HCT116 (cell line): ENCODE measurements at regions of chr18 and their contacts with region 1.

Region 1: GRCh38 chr18:63848159-63848558 is 39.3 kb upstream of the SERPINB2 start:
- DNase-seq: peak; percentile 66
- ATAC-seq: peak; percentile 76
- H3K4me3 ChIP-seq: no peak overlapping the region
- H3K27ac ChIP-seq: no peak overlapping the region
- H3K4me1 ChIP-seq: no peaks in the 10 kb centered on the region
- H3K27me3 ChIP-seq: no peaks in the 10 kb centered on the region
- CTCF ChIP-seq: peak; percentile 56 to 81 (median 70); a peak in 5 of 6 replicates
- POLR2A ChIP-seq: no peak
- RAD21 ChIP-seq: peak; percentile 74

Region 2: DNA sequence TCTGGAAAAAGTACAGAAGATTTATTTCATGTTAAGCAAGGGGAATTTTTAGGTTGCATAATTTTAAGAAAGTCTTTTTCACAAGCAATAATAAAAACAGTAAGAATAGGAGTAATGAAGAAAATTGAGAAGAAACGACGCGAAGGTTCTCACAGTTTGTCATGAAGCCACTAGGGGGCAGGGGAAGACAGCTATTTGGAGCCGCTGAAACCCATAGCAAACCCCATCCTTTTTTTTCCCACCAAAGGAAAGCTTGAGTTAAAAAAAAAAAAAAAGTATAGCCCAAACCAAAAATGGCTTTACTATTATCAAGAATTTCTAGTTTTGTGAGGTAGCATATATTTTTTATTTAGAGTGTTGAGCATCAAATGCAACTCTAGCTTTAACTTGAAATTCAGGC is 831.9 kb before region 1 on chr18:
- CTCF ChIA-PET with region 1: interaction called, 5 read pairs
- POLR2A ChIA-PET with region 1: no interaction called
- RAD21 ChIA-PET with region 1: no interaction called
- intact Hi-C with region 1: loop called (anchors 2 kb)
- DNase-seq: peak; percentile 32
- ATAC-seq: peak; percentile 79
- H3K4me3 ChIP-seq: no peak overlapping the region
- H3K27ac ChIP-seq: no peak overlapping the region
- H3K4me1 ChIP-seq: no peaks in the 10 kb centered on the region
- H3K27me3 ChIP-seq: no peaks in the 10 kb centered on the region
- CTCF ChIP-seq: peak; percentile 73 to 87 (median 73)
- POLR2A ChIP-seq: no peak
- RAD21 ChIP-seq: peak; percentile 82

Region 3: DNA sequence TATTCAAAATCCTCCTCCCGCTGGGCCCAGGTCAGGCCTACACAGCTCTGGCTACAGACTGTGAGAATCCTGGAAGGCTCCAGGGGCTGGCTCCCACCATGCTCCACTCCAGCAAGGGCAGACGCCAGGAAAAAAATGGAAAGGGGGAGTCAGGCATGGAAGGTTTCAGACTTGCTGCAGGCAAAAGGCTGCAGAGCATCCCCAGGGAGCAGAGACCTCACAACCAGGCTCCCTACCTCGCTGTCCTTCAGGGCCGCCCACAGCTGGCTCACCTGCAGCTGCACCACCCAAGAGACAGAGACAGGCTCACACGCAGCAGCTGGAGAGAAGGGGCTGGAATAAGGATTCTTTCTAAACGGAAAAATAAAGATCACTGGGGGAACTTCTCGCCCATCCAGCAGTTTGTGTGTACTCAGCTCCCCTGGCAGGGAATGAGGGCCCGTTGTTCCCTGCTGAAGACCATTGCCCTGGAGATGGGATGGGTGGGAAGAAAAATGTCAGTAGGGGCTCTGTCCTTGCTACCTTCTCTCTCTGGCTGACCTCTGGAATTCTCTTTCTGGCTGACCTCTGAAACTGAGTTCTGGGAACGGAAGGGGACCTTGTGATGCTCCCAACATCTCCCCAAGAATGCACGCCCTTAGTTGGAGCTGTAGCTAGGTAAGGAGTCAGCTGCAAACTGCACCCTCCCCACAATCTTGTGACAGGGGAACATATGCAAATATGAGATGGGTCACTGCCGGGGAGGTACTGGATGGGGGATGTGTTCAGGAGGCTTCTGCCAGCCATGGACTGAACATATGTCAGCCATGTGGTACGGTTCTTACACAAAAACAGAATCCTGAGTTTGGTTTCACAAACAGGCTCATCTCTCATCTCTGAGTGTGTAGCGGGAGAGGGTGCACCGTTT is 563.1 kb before region 1 on chr18:
- CTCF ChIA-PET with region 1: no interaction called
- POLR2A ChIA-PET with region 1: no interaction called
- RAD21 ChIA-PET with region 1: no interaction called
- intact Hi-C with region 1: no loop called
- DNase-seq: no peak
- ATAC-seq: no peak
- H3K4me3 ChIP-seq: no peak overlapping the region
- H3K27ac ChIP-seq: no peak overlapping the region
- H3K4me1 ChIP-seq: no peaks in the 10 kb centered on the region
- H3K27me3 ChIP-seq: peaks cover 14% of the 10 kb centered on the region; the same call in 1 of the 2 replicates
- CTCF ChIP-seq: no peak
- POLR2A ChIP-seq: no peak
- RAD21 ChIP-seq: no peak

Region 4: DNA sequence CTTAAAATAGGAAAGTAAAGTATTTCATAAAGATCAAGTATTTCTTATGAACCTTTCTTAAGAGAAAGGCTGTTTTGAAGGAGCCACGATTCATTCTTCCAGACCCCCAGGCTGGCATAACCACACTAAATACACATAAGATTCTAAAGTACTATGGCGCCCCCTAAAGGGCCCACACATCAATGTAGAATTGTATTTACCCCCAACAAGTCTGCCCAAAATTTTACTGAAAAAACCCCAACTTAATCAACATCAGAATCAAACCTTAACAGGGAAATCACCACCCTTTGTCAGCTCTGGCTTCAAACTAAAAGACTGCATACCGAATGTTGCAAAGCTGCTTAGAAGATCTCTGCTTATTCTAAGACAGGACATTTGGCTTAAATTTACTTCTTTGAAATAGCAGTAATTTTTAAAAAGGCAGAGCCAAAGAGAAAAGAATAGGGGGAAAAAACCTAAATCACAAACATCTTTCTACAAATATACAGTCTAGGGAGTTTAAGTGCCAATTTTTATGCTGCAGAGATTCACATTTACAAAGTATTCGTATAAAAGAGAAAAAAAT is 508.2 kb before region 1 on chr18:
- CTCF ChIA-PET with region 1: no interaction called
- POLR2A ChIA-PET with region 1: no interaction called
- RAD21 ChIA-PET with region 1: no interaction called
- intact Hi-C with region 1: loop called (anchors 10 kb)
- DNase-seq: peak; percentile 10
- ATAC-seq: peak; percentile 57; the same call in 1 of the 2 replicates
- H3K4me3 ChIP-seq: no peak overlapping the region
- H3K27ac ChIP-seq: no peak overlapping the region
- H3K4me1 ChIP-seq: peaks cover 10 to 15% of the 10 kb centered on the region in 2 experiments
- H3K27me3 ChIP-seq: no peaks in the 10 kb centered on the region
- CTCF ChIP-seq: peak; percentile 29 to 78 (median 68); a peak in 5 of 6 replicates
- POLR2A ChIP-seq: no peak
- RAD21 ChIP-seq: peak; percentile 41; the same call in 1 of the 2 replicates

Region 5: GRCh38 chr18:63439334-63439733 is 408.8 kb before region 1 on chr18:
- CTCF ChIA-PET with region 1: interaction called, 3 read pairs
- POLR2A ChIA-PET with region 1: no interaction called
- RAD21 ChIA-PET with region 1: no interaction called
- intact Hi-C with region 1: loop called (anchors 5 kb)
- DNase-seq: peak; percentile 70
- ATAC-seq: peak; percentile 93
- H3K4me3 ChIP-seq: no peak overlapping the region
- H3K27ac ChIP-seq: no peak overlapping the region
- H3K4me1 ChIP-seq: 0 out of 4 replicates have a peak, but pooled peaks cover 0 to 2% of the 10 kb centered on the region in 2 experiments
- H3K27me3 ChIP-seq: no peaks in the 10 kb centered on the region
- CTCF ChIP-seq: peak; percentile 73 to 89 (median 80)
- POLR2A ChIP-seq: no peak
- RAD21 ChIP-seq: peak; percentile 88

Region 6: GRCh38 chr18:63511286-63511685 is 336.9 kb before region 1 on chr18:
- CTCF ChIA-PET with region 1: interaction called, 32 read pairs
- POLR2A ChIA-PET with region 1: no interaction called
- RAD21 ChIA-PET with region 1: interaction called in 1 of 2 experiments, 4 read pairs
- intact Hi-C with region 1: no loop called
- DNase-seq: peak; percentile 82
- ATAC-seq: peak; percentile 92
- H3K4me3 ChIP-seq: no peak overlapping the region
- H3K27ac ChIP-seq: no peak overlapping the region
- H3K4me1 ChIP-seq: no peaks in the 10 kb centered on the region
- H3K27me3 ChIP-seq: no peaks in the 10 kb centered on the region
- CTCF ChIP-seq: peak; percentile 55 to 85 (median 78); a peak in 5 of 6 replicates
- POLR2A ChIP-seq: no peak
- RAD21 ChIP-seq: peak; percentile 58

Region 7: GRCh38 chr18:63518178-63519012 is 329.8 kb before region 1 on chr18:
- CTCF ChIA-PET with region 1: interaction called, 32 read pairs
- POLR2A ChIA-PET with region 1: interaction called, 3 read pairs
- RAD21 ChIA-PET with region 1: interaction called, 3 read pairs
- intact Hi-C with region 1: loop called (anchors 1 kb)
- DNase-seq: peak; percentile 78
- ATAC-seq: peak; percentile 98
- H3K4me3 ChIP-seq: no peak overlapping the region
- H3K27ac ChIP-seq: no peak overlapping the region
- H3K4me1 ChIP-seq: no peaks in the 10 kb centered on the region
- H3K27me3 ChIP-seq: no peaks in the 10 kb centered on the region
- CTCF ChIP-seq: peak; percentile 50 to 76 (median 74); a peak in 5 of 6 replicates
- POLR2A ChIP-seq: no peak
- RAD21 ChIP-seq: peak; percentile 90

Region 8: DNA sequence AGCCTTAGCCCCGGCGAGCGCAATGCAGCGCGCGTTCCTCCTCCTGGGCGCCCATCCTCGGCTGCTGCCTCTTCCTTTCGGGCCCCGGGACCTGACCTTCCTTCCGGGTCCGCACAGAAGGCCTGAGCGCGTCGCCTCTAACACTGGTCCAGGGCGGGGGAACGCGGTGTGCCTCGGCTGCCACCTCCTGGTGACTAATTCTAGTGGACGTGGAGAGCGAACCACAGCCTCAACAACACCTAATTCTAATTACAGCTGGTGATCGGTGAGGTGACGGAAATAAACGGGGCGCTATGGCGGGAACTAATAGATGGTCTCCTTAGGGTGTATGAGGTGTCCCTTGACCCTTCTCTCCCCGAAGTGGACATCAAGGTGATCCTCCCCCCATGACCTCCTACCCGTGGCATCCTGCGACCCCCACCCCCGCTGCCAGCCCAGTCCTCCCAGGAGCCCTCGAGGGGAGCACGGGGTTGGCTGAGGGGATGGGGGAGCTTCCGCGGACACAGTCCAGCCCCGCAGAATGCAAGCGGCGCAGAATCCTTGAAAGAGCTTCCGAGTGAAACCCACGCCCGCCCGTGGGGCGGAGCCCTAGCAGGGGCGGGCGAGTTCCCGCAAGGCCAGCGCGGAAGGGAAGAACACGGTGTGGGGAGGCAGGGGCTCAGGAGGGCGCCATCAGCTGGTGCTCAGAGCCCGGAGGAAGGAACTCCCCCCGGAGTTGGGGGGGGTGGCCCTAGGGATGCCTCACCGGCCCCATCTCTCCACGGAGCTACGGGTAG is 88.2 kb after region 1 on chr18:
- CTCF ChIA-PET with region 1: interaction called, 5 read pairs
- POLR2A ChIA-PET with region 1: no interaction called
- RAD21 ChIA-PET with region 1: no interaction called
- intact Hi-C with region 1: loop called (anchors 1 kb)
- DNase-seq: peak; percentile 64
- ATAC-seq: peak; percentile 100
- H3K4me3 ChIP-seq: peak overlapping the region; percentile 22 to 37
- H3K27ac ChIP-seq: no peak overlapping the region
- H3K4me1 ChIP-seq: peaks cover 0 to 10% of the 10 kb centered on the region in 2 experiments; a peak in 1 of 4 replicates
- H3K27me3 ChIP-seq: no peaks in the 10 kb centered on the region
- CTCF ChIP-seq: peak; percentile 63 to 78 (median 71); a peak in 5 of 6 replicates
- POLR2A ChIP-seq: no peak
- RAD21 ChIP-seq: peak; percentile 73

Region 9: DNA sequence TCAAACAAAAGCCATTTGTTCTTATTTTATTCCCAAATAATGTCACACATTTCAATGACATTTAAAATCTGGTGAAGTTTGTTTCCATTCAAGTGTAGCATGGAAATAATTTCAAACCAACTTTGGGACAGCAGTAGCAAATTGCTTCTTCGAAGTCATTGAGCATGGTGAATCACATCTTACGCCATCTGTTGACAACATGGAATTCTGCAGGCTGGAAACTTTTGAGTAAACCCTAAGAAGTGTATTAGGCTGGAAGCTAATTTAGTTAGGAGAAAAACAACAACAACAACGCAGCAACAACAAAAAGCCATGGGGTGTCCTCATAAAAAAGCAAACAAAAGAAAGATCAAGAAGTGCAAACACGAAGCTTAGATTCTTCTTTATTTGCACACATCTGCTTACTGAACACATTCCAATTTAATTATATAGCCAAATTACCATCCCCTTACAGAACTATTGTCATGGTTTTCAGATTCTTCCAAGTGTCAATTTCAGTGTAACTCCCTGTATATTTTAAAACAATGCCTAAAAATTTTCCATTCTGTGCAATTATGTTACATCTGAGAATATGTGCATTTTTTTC is 1243.7 kb after region 1 on chr18:
- CTCF ChIA-PET with region 1: no interaction called
- POLR2A ChIA-PET with region 1: no interaction called
- RAD21 ChIA-PET with region 1: no interaction called
- intact Hi-C with region 1: no loop called
- DNase-seq: no peak
- ATAC-seq: no peak
- H3K4me3 ChIP-seq: no peak overlapping the region
- H3K27ac ChIP-seq: no peak overlapping the region
- H3K4me1 ChIP-seq: no peaks in the 10 kb centered on the region
- H3K27me3 ChIP-seq: no peaks in the 10 kb centered on the region
- CTCF ChIP-seq: peak in 2 of 3 experiments; percentile 25 to 32; a peak in 3 of 6 replicates
- POLR2A ChIP-seq: no peak
- RAD21 ChIP-seq: no peak